Colonic mucosa (tissue), 4 donors: ENCODE measurements at regions of chr2 and their contacts with region 1.

Region 1: GRCh38 chr2:197425550-197425949 is 9.3 kb downstream of the SF3B1 start:
- DNase-seq: no peak
- H3K4me3 ChIP-seq: no peak overlapping the region
- H3K27ac ChIP-seq: no peak overlapping the region
- H3K4me1 ChIP-seq: no peaks in the 10 kb centered on the region
- H3K27me3 ChIP-seq: no peaks in the 10 kb centered on the region
- CTCF ChIP-seq: no peak

Region 2: GRCh38 chr2:197369228-197369932 is 56.2 kb before region 1 on chr2:
- intact Hi-C with region 1: no loop called
- DNase-seq: no peak
- H3K4me3 ChIP-seq: no peak overlapping the region
- H3K27ac ChIP-seq: no peak overlapping the region
- H3K4me1 ChIP-seq: no peaks in the 10 kb centered on the region
- H3K27me3 ChIP-seq: no peaks in the 10 kb centered on the region
- CTCF ChIP-seq: no peak

Region 3: DNA sequence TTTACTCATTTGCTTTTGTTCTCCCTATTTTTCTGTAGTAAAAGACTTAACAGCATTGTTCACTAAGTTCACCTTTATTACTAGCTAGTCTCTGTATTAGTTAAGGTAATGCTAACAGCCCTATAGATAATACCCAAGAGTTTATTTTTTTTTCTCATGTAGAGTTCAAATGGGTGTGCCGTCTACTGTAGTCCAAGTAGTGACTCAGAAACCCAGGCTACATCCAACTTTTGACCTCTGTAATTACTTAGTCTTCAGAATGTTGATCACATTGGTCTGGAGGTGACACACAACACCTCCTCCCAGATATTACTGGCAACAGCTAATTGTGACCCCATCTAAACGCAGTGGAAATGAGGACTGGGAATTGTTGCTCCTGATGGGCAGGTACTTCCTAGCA is 35.5 kb after region 1 on chr2:
- intact Hi-C with region 1: loop called (anchors 5 kb)
- DNase-seq: no peak
- H3K4me3 ChIP-seq: no peak overlapping the region
- H3K27ac ChIP-seq: peak overlapping the region; percentile 5
- H3K4me1 ChIP-seq: no peaks in the 10 kb centered on the region
- H3K27me3 ChIP-seq: no peaks in the 10 kb centered on the region
- CTCF ChIP-seq: no peak